ENCODE measurements at regions of chr2 and their contacts with region 1.

Region 1: GRCh38 chr2:68251187-68251854 is 1.0 kb downstream of the PPP3R1 start:
- DNase-seq: peak; percentile 66 to 72
- ATAC-seq: peak; percentile 78 to 79
- H3K4me3 ChIP-seq: peak overlapping the region; percentile 84 to 92 (median 90)
- H3K27ac ChIP-seq: peak overlapping the region; percentile 95 to 97 (median 97)
- H3K4me1 ChIP-seq: peaks cover 51 to 54% of the 10 kb centered on the region in 2 donors
- H3K27me3 ChIP-seq: no peaks in the 10 kb centered on the region
- CTCF ChIP-seq: peak; percentile 67 to 79 (median 75)
- POLR2A ChIP-seq: peak in 1 of 2 donors; percentile 12

Region 2: GRCh38 chr2:68062680-68063387 is 188.5 kb before region 1 on chr2 and contains the start of gene C1D:
- in situ Hi-C with region 1: no loop called
- intact Hi-C with region 1: loop called (anchors 5 kb)
- DNase-seq: peak; percentile 84 to 90
- ATAC-seq: peak; percentile 99
- H3K4me3 ChIP-seq: peak within 1 kb of the TSS; percentile 60 to 88 (median 82)
- H3K27ac ChIP-seq: peak within 1 kb of the TSS; percentile 82 to 92 (median 90)
- H3K4me1 ChIP-seq: peaks cover 38 to 50% of the 10 kb centered on the region in 2 donors
- H3K27me3 ChIP-seq: no peaks in the 10 kb centered on the region
- CTCF ChIP-seq: no peak
- POLR2A ChIP-seq: peak; percentile 46 to 48
- total RNA-seq, gene C1D: 29.7 to 57.3 (median 41.4) TPM

Region 3: GRCh38 chr2:68157402-68158133 is 93.8 kb before region 1 on chr2 and contains the start of gene PNO1:
- in situ Hi-C with region 1: no loop called
- intact Hi-C with region 1: loop called (anchors 1 kb)
- DNase-seq: peak; percentile 92 to 94
- ATAC-seq: peak; percentile 96 to 98
- H3K4me3 ChIP-seq: peak within 1 kb of the TSS; percentile 93 to 97 (median 96)
- H3K27ac ChIP-seq: peak within 1 kb of the TSS; percentile 89 to 96 (median 91)
- H3K4me1 ChIP-seq: peaks cover 28 to 31% of the 10 kb centered on the region in 2 donors
- H3K27me3 ChIP-seq: no peaks in the 10 kb centered on the region
- CTCF ChIP-seq: peak in 1 of 5 experiments; percentile 27
- POLR2A ChIP-seq: peak; percentile 33 to 49
- total RNA-seq, gene PNO1: 19.8 to 26.4 (median 23.6) TPM

Region 4: DNA sequence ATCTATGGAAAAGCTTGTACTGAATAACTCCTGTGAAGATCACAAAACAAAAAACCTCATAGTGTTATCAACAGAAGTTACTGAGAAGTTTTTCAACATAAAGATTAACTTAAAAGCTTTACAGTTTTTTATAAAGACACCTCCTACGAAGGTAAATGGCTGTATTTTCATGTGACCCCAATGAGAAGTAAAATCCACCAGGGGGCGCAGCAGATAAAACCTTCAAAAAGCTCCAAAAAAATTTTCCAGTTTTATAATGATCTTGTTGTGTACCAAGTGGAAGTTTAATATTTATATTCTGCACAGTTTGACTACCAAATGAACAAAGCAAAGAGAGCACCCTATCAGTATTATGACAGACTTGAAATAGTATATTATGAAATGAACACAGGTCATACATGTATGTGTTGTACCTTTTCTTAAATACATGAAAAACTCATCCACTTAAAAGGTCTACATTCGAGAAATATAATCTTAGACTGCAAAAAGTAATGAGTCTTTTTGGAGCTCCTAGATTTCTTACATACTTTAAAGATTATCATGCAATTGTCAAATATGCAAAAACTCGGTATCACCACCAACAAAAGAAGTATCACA is 55.1 kb before region 1 on chr2:
- in situ Hi-C with region 1: loop called in 3 of 4 experiments (anchors 10 kb)
- intact Hi-C with region 1: loop called (anchors 1 kb)
- DNase-seq: no peak
- ATAC-seq: no peak
- H3K4me3 ChIP-seq: no peak overlapping the region
- H3K27ac ChIP-seq: peak overlapping the region in 2 of 4 donors; percentile 29 to 40
- H3K4me1 ChIP-seq: peaks cover 40 to 44% of the 10 kb centered on the region in 2 donors
- H3K27me3 ChIP-seq: no peaks in the 10 kb centered on the region
- CTCF ChIP-seq: peak in 4 of 5 experiments; percentile 64 to 82 (median 76)
- POLR2A ChIP-seq: no peak

Region 5: GRCh38 chr2:68282811-68283418 is 31.6 kb after region 1 on chr2:
- in situ Hi-C with region 1: no loop called
- intact Hi-C with region 1: loop called (anchors 5 kb)
- DNase-seq: no peak
- ATAC-seq: peak in 1 of 2 donors; percentile 54
- H3K4me3 ChIP-seq: no peak overlapping the region
- H3K27ac ChIP-seq: no peak overlapping the region
- H3K4me1 ChIP-seq: peaks cover 16 to 17% of the 10 kb centered on the region in 2 donors
- H3K27me3 ChIP-seq: no peaks in the 10 kb centered on the region
- CTCF ChIP-seq: peak in 4 of 5 experiments; percentile 53 to 75 (median 60)
- POLR2A ChIP-seq: no peak

Region 6: GRCh38 chr2:68319398-68320117 is 68.2 kb after region 1 on chr2 and contains the start of gene CNRIP1:
- in situ Hi-C with region 1: no loop called
- intact Hi-C with region 1: loop called (anchors 2 kb)
- DNase-seq: peak; percentile 48 to 55
- ATAC-seq: peak; percentile 68 to 85
- H3K4me3 ChIP-seq: peak within 1 kb of the TSS; percentile 68 to 90 (median 78)
- H3K27ac ChIP-seq: peak within 1 kb of the TSS; percentile 80 to 88 (median 88)
- H3K4me1 ChIP-seq: peaks cover 0 to 17% of the 10 kb centered on the region in 2 donors
- H3K27me3 ChIP-seq: no peaks in the 10 kb centered on the region
- CTCF ChIP-seq: no peak
- POLR2A ChIP-seq: peak; percentile 54 to 70
- total RNA-seq, gene CNRIP1: 4.7 to 7.6 (median 6.5) TPM

Region 7: GRCh38 chr2:68762665-68763064 is 511.3 kb after region 1 on chr2:
- in situ Hi-C with region 1: no loop called
- intact Hi-C with region 1: no loop called
- DNase-seq: no peak
- ATAC-seq: no peak
- H3K4me3 ChIP-seq: no peak overlapping the region
- H3K27ac ChIP-seq: no peak overlapping the region
- H3K4me1 ChIP-seq: no peaks in the 10 kb centered on the region
- H3K27me3 ChIP-seq: no peaks in the 10 kb centered on the region
- CTCF ChIP-seq: no peak
- POLR2A ChIP-seq: no peak

Region 8: DNA sequence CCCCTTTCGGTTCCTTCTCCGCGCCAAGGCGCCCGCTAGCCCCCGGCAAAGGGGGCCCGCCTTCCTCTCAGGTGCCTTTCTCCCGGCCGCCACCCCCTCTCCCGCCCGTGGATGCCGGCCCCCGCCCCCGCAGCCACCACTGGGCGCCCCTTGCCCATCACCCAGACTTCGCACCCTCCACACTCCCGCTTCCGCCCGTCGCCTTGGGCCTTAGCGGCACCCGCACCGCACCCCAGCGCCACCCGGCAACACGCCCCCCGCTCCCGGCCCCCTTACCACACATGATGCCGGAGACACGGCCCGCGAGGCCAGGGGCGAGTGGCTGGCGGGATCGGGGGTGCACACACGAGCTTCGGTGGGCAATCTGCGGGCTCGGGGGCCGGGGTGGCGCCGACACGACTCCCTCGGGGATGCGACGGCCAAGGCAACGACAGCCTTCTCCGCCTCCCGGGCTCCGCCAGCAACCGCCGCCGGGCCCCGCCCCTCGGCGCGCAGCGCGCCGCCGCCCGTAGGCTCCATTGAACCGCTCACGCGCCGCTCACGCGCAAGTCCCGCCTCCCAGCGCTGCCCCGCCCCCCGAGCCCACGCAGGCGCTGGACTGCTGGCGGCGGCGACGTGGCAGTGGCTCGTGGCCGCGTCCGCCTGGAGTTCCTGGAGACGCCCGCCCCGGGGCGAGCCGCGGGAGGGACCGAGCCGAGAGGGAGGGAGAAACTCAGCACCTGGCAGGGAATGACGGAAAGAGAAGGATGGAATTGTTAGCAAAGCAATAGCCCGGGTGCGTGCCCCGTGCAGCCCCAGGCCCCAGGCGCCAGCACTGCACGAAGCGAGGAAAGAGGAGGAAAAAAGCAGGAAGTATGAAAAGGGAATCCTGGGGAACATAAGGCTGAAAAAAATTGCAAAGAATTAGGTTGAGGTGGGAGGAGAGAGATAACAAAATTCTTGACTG is 1135.7 kb after region 1 on chr2 and contains the start of gene GFPT1:
- in situ Hi-C with region 1: no loop called
- intact Hi-C with region 1: loop called (anchors 10 kb)
- DNase-seq: peak; percentile 86 to 91
- ATAC-seq: peak; percentile 93 to 95
- H3K4me3 ChIP-seq: peak within 1 kb of the TSS; percentile 77 to 93 (median 81)
- H3K27ac ChIP-seq: peak within 1 kb of the TSS; percentile 80 to 83 (median 82)
- H3K4me1 ChIP-seq: peaks cover 18 to 21% of the 10 kb centered on the region in 2 donors
- H3K27me3 ChIP-seq: no peaks in the 10 kb centered on the region
- CTCF ChIP-seq: no peak
- POLR2A ChIP-seq: peak; percentile 71 to 79
- total RNA-seq, gene GFPT1: 12.2 to 31.4 (median 14.8) TPM